Caco-2 (cell line): ENCODE measurements at regions of chr16 and their contacts with region 1.

Region 1: GRCh38 chr16:55643161-55643970 is 12.4 kb upstream of the SLC6A2 start:
- DNase-seq: peak in 1 of 2 experiments; percentile 47
- H3K4me3 ChIP-seq: no peak overlapping the region
- H3K4me3 Mint-ChIP-seq: no peak overlapping the region
- H3K27ac Mint-ChIP-seq: no peak overlapping the region
- H3K4me1 ChIP-seq: no peaks in the 10 kb centered on the region
- H3K4me1 Mint-ChIP-seq: no peaks in the 10 kb centered on the region
- H3K27me3 ChIP-seq: no peaks in the 10 kb centered on the region
- H3K27me3 Mint-ChIP-seq: peaks cover 14% of the 10 kb centered on the region
- CTCF ChIP-seq: peak in 1 of 2 experiments; percentile 40

Region 2: DNA sequence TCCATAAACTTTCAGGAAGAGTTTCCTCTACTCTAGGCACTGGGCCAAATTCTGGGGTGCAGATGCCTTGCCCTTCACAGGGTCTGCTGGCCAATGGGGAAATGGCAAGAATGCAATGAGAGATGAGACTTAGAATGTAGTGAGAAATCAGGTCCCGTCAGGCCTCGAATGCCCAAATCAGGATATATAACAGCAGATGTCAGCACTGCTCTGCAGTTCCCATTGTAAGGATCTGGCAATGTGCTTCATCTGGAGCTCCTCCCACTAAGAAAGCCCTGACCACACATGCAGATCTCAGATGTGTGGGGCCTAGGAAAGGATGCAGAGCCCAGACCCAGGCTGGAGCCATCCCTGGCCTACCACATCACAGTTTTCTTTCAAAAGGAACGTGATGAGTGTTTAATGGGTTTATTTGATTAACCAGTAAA is 148.4 kb before region 1 on chr16:
- CTCF ChIA-PET with region 1: interaction called, 6 read pairs
- POLR2A ChIA-PET with region 1: no interaction called
- intact Hi-C with region 1: loop called (anchors 10 kb)
- DNase-seq: peak; percentile 56 to 69
- H3K4me3 ChIP-seq: no peak overlapping the region
- H3K4me3 Mint-ChIP-seq: no peak overlapping the region
- H3K27ac Mint-ChIP-seq: no peak overlapping the region
- H3K4me1 ChIP-seq: peaks cover 9% of the 10 kb centered on the region; the same call in 1 of the 2 replicates
- H3K4me1 Mint-ChIP-seq: peaks cover 7% of the 10 kb centered on the region
- H3K27me3 ChIP-seq: no peaks in the 10 kb centered on the region
- H3K27me3 Mint-ChIP-seq: no peaks in the 10 kb centered on the region
- CTCF ChIP-seq: peak in 1 of 2 experiments; percentile 41

Region 3: GRCh38 chr16:55622930-55623561 is 20.3 kb before region 1 on chr16:
- CTCF ChIA-PET with region 1: interaction called, 4 read pairs
- POLR2A ChIA-PET with region 1: no interaction called
- intact Hi-C with region 1: loop called (anchors 2 kb)
- DNase-seq: peak; percentile 67 to 69
- H3K4me3 ChIP-seq: no peak overlapping the region
- H3K4me3 Mint-ChIP-seq: no peak overlapping the region
- H3K27ac Mint-ChIP-seq: no peak overlapping the region
- H3K4me1 ChIP-seq: no peaks in the 10 kb centered on the region
- H3K4me1 Mint-ChIP-seq: peaks cover 9% of the 10 kb centered on the region
- H3K27me3 ChIP-seq: no peaks in the 10 kb centered on the region
- H3K27me3 Mint-ChIP-seq: peaks cover 5% of the 10 kb centered on the region
- CTCF ChIP-seq: peak; percentile 60 to 65

Region 4: GRCh38 chr16:55672471-55672870 is 29.1 kb after region 1 on chr16:
- CTCF ChIA-PET with region 1: no interaction called
- POLR2A ChIA-PET with region 1: no interaction called
- intact Hi-C with region 1: no loop called
- DNase-seq: no peak
- H3K4me3 ChIP-seq: no peak overlapping the region
- H3K4me3 Mint-ChIP-seq: no peak overlapping the region
- H3K27ac Mint-ChIP-seq: no peak overlapping the region
- H3K4me1 ChIP-seq: no peaks in the 10 kb centered on the region
- H3K4me1 Mint-ChIP-seq: no peaks in the 10 kb centered on the region
- H3K27me3 ChIP-seq: no peaks in the 10 kb centered on the region
- H3K27me3 Mint-ChIP-seq: peaks cover 15% of the 10 kb centered on the region
- CTCF ChIP-seq: no peak